Endothelial cell of umbilical vein (primary cell): ENCODE measurements at regions of chr4 and their contacts with region 1.

Region 1: GRCh38 chr4:183098723-183099536 is at the start of gene WWC2:
- DNase-seq: peak; percentile 94
- H3K4me3 ChIP-seq: peak within 1 kb of the TSS; percentile 80 to 90 (median 83)
- H3K27ac ChIP-seq: peak within 1 kb of the TSS; percentile 99
- H3K4me1 ChIP-seq: peaks cover 24% of the 10 kb centered on the region
- H3K27me3 ChIP-seq: no peaks in the 10 kb centered on the region
- CTCF ChIP-seq: no peak
- POLR2A ChIP-seq: peak; percentile 68
- total RNA-seq, gene WWC2: 51.8 and 52.2 TPM in 2 replicates

Region 2: DNA sequence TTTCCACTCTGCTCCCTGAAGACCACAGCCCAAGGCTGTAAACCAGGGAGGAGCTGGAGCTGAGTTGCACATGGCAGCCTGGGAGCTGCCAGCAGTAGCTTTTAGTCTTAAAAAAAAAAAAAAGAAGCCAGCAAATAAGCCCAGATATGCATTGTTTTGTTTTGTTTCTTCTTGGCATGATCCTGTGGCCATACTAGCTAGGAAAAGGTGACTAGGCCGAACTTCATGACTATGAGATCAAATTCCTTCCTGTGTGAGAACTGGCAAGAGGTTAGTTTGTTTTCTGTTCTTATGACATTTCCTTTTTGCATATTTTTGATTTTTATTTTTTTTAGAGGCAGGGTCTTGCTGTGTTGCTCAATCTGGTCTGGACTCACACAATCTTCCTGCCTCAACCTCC is 505.1 kb before region 1 on chr4:
- CTCF ChIA-PET with region 1: no interaction called
- POLR2A ChIA-PET with region 1: no interaction called
- dilution Hi-C with region 1: no loop called
- intact Hi-C with region 1: loop called (anchors 5 kb)
- DNase-seq: peak; percentile 95
- H3K4me3 ChIP-seq: peak overlapping the region in 1 of 3 experiments; percentile 44
- H3K27ac ChIP-seq: peak overlapping the region; percentile 91
- H3K4me1 ChIP-seq: peaks cover 26% of the 10 kb centered on the region
- H3K27me3 ChIP-seq: no peaks in the 10 kb centered on the region
- CTCF ChIP-seq: no peak
- POLR2A ChIP-seq: no peak

Region 3: GRCh38 chr4:183118585-183118984 is 19.7 kb after region 1 on chr4:
- CTCF ChIA-PET with region 1: interaction called, 3 read pairs
- POLR2A ChIA-PET with region 1: interaction called, 5 read pairs
- dilution Hi-C with region 1: no loop called
- intact Hi-C with region 1: loop called (anchors 1 kb)
- DNase-seq: peak; percentile 73
- H3K4me3 ChIP-seq: no peak overlapping the region
- H3K27ac ChIP-seq: peak overlapping the region; percentile 73
- H3K4me1 ChIP-seq: peaks cover 16% of the 10 kb centered on the region
- H3K27me3 ChIP-seq: no peaks in the 10 kb centered on the region
- CTCF ChIP-seq: no peak
- POLR2A ChIP-seq: no peak

Region 4: GRCh38 chr4:183175631-183176232 is 76.8 kb after region 1 on chr4:
- CTCF ChIA-PET with region 1: interaction called, 6 read pairs
- POLR2A ChIA-PET with region 1: interaction called, 3 read pairs
- dilution Hi-C with region 1: no loop called
- intact Hi-C with region 1: loop called (anchors 1 kb)
- DNase-seq: peak; percentile 68
- H3K4me3 ChIP-seq: no peak overlapping the region
- H3K27ac ChIP-seq: peak overlapping the region; percentile 25
- H3K4me1 ChIP-seq: peaks cover 37% of the 10 kb centered on the region
- H3K27me3 ChIP-seq: no peaks in the 10 kb centered on the region
- CTCF ChIP-seq: no peak
- POLR2A ChIP-seq: no peak

Region 5: GRCh38 chr4:183200453-183200852 is 101.5 kb after region 1 on chr4:
- CTCF ChIA-PET with region 1: no interaction called
- POLR2A ChIA-PET with region 1: interaction called, 6 read pairs
- dilution Hi-C with region 1: no loop called
- intact Hi-C with region 1: loop called (anchors 1 kb)
- DNase-seq: peak; percentile 93
- H3K4me3 ChIP-seq: no peak overlapping the region
- H3K27ac ChIP-seq: peak overlapping the region; percentile 9
- H3K4me1 ChIP-seq: peaks cover 14% of the 10 kb centered on the region
- H3K27me3 ChIP-seq: no peaks in the 10 kb centered on the region
- CTCF ChIP-seq: no peak
- POLR2A ChIP-seq: no peak

Region 6: DNA sequence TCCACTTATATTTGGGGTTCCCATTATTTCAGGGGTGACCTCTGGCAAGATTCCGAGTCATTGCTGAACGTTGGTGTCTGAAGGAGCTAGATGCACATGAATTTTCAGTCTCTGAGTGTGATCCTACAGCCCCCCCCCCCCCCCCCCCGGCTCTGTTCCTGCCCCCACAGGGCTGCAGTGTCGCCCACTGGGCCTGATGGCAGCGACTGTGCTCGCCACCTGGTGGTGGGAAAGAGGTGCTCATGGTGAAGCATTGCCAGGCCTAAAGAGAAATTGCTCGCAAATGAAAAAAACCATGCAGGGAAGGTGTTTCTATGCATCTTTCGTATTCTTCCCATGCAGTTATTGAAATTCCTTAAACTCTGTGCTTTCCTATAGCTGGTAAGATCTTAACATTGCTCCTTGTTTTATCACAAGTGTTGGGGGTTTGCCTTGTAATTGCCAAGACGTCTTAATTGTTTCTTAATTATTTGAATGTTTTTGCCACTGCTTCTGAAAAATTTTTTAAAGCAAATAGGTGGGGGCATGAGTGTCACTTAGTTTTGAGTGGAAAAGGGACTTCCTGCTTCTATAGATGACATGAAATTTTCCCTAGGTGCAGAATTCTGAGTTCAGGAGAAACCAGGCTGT is 157.9 kb after region 1 on chr4:
- CTCF ChIA-PET with region 1: interaction called, 30 read pairs
- POLR2A ChIA-PET with region 1: no interaction called
- dilution Hi-C with region 1: loop called (anchors 10 kb)
- intact Hi-C with region 1: loop called (anchors 1 kb)
- DNase-seq: peak; percentile 45
- H3K4me3 ChIP-seq: no peak overlapping the region
- H3K27ac ChIP-seq: no peak overlapping the region
- H3K4me1 ChIP-seq: no peaks in the 10 kb centered on the region
- H3K27me3 ChIP-seq: no peaks in the 10 kb centered on the region
- CTCF ChIP-seq: peak; percentile 59 to 81
- POLR2A ChIP-seq: no peak

Region 7: DNA sequence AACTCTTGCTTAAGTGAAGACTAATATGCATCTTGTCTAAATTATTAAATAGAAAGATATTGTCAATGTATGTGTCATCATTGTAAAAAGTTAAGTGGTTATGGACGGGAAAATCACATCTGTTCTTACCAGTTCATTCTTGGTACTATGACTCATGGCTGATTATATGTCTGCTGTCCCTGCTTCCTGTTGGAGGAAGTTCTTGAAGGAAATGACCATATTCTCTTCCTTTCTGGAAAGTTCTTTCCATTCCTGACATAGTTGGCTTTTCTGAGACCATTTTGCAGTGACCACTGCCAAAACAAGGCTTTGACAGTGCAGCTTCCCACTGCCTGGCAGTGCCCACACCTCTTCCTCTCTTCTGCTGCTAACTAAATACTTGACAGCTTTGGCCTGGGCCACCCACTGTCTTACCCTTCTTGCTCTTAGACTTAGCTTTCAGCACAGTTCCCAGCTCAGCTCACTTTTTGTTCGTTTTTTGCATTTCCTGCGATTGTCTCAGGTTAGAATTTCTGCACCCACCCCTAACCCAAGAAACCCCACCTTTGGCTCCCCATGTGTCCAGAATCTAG is 236.5 kb after region 1 on chr4:
- CTCF ChIA-PET with region 1: no interaction called
- POLR2A ChIA-PET with region 1: no interaction called
- dilution Hi-C with region 1: no loop called
- intact Hi-C with region 1: loop called (anchors 1 kb)
- DNase-seq: peak; percentile 91
- H3K4me3 ChIP-seq: no peak overlapping the region
- H3K27ac ChIP-seq: peak overlapping the region; percentile 96
- H3K4me1 ChIP-seq: peaks cover 27% of the 10 kb centered on the region
- H3K27me3 ChIP-seq: no peaks in the 10 kb centered on the region
- CTCF ChIP-seq: no peak
- POLR2A ChIP-seq: peak; percentile 63